Kidney (tissue), 22 donors: ENCODE measurements at regions of chr21 and their contacts with region 1.

Region 1: GRCh38 chr21:40385892-40386599 is 460.9 kb downstream of the DSCAM start:
- DNase-seq: peak; percentile 59 to 84 (median 66)
- H3K4me3 ChIP-seq: no peak overlapping the region
- H3K27ac ChIP-seq: no peak overlapping the region
- H3K4me1 ChIP-seq: peaks cover 0 to 7% (median 0%) of the 10 kb centered on the region in 3 donors
- H3K27me3 ChIP-seq: no peaks in the 10 kb centered on the region
- CTCF ChIP-seq: peak; percentile 73

Region 2: DNA sequence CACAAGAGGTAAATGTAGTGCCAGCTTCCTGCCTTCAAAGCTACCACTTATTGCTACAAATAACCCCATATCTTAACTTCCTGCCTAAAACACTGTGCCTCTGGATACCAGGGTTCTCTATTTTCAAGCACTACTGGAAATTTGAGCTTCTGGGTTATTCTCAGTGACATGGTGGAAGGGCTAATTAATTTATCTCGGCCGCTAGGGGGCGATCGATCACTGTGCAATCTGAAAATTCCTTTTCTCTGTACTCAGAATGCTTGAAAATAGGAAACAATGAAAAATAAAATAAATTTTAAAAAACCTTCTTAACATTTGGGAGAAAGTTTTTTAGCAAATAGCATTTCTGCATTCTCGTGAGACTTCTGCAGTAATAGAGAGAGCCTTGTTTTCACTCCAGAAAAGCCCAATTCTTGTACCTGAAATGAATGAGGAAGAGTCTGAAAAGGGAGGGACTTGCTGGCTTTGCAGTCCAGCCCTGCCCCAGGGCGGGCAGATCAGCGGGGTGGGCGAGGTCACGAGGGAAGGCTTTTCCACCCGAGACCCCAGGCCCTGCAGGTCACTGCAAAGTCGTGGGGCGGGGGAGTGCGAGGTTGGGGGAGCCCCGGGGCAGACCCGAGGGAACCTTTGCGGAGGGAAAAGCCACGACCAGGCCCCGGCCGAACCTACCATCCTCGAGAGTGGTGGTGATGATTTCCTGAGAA is 242.1 kb before region 1 on chr21:
- intact Hi-C with region 1: loop called (anchors 10 kb)
- DNase-seq: peak; percentile 69 to 83 (median 71)
- H3K4me3 ChIP-seq: no peak overlapping the region
- H3K27ac ChIP-seq: no peak overlapping the region
- H3K4me1 ChIP-seq: peaks cover 0 to 4% (median 0%) of the 10 kb centered on the region in 3 donors
- H3K27me3 ChIP-seq: no peaks in the 10 kb centered on the region
- CTCF ChIP-seq: peak; percentile 78